HEK293 (cell line): ENCODE measurements at regions of chr6 and their contacts with region 1.

Region 1: GRCh38 chr6:136550330-136551071 is at the start of gene MAP7:
- H3K4me3 ChIP-seq: peak within 1 kb of the TSS; percentile 90
- H3K27ac ChIP-seq: peak within 1 kb of the TSS; percentile 82; the same call in 1 of the 2 replicates
- H3K4me1 ChIP-seq: peaks cover 10% of the 10 kb centered on the region
- CTCF ChIP-seq: 0 out of 2 replicates have a peak, but pooled peaks have one; percentile 46

Region 2: GRCh38 chr6:136249811-136250685 is 300.5 kb before region 1 on chr6 and contains the start of gene MTFR2:
- CTCF ChIA-PET with region 1: interaction called, 4 read pairs
- POLR2A ChIA-PET with region 1: interaction called, 11 read pairs
- H3K4me3 ChIP-seq: peak within 1 kb of the TSS; percentile 80
- H3K27ac ChIP-seq: peak within 1 kb of the TSS; percentile 51
- H3K4me1 ChIP-seq: peaks cover 12% of the 10 kb centered on the region; the same call in 1 of the 2 replicates
- CTCF ChIP-seq: peak; percentile 87; the same call in 1 of the 2 replicates

Region 3: GRCh38 chr6:136289579-136290409 is 260.7 kb before region 1 on chr6 and contains the start of gene BCLAF1:
- CTCF ChIA-PET with region 1: interaction called, 8 read pairs
- POLR2A ChIA-PET with region 1: interaction called, 15 read pairs
- H3K4me3 ChIP-seq: peak within 1 kb of the TSS; percentile 79
- H3K27ac ChIP-seq: peak within 1 kb of the TSS; percentile 95
- H3K4me1 ChIP-seq: peaks cover 13% of the 10 kb centered on the region
- CTCF ChIP-seq: peak; percentile 36; the same call in 1 of the 2 replicates

Region 4: DNA sequence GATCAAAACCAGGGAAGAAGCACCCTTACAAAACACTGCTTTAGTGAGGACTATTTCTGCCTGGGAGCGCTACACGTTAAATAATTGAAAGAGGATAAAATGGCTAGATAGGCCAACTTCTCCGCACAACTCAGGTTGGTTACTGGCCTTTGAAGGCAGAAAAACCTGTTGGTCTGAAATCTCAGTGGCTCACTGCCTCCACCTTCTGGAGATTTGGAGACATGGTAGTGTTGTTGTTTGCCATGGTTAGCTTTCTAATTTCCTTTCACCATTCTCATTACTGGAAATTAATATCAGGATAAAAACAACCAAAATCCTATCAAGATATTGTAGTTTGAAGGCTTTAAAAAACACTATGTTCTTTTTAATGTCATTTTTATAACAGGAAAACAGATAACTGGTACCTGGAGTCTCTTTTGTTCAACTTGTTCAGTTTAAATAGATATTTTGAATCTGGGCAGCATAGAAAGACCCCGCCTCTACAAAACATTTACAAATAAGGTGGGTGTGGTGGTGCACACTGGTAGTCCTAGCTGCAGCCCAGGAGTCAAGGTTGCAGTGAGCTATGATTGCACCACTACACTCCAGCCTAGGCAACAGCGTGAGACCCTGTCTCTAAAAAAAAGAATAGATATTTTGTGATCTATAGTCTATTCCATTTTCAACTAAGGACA is 233.3 kb before region 1 on chr6:
- CTCF ChIA-PET with region 1: interaction called, 11 read pairs
- POLR2A ChIA-PET with region 1: no interaction called
- H3K4me3 ChIP-seq: no peak overlapping the region
- H3K27ac ChIP-seq: no peak overlapping the region
- H3K4me1 ChIP-seq: no peaks in the 10 kb centered on the region
- CTCF ChIP-seq: peak; percentile 47

Region 5: DNA sequence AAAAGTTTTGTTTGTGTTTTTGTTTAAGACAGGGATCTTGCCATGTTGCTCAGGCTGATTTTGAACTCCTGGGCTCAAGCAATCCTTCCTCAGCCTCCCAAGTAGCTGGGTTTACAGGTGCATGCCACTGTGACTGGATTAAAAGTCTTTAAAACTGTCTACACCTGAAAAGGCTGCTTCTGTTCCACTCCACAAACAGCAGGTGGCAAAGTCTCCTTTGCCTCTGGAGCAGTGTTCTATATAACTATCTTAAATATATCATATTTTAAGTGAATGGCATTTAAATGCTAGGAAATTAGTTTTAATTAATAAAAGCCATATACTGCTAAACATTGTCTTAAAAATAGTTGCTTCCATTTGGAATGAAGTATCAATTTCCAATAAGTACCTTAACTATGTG is 171.6 kb before region 1 on chr6:
- CTCF ChIA-PET with region 1: interaction called, 11 read pairs
- POLR2A ChIA-PET with region 1: no interaction called
- H3K4me3 ChIP-seq: no peak overlapping the region
- H3K27ac ChIP-seq: no peak overlapping the region
- H3K4me1 ChIP-seq: no peaks in the 10 kb centered on the region
- CTCF ChIP-seq: no peak

Region 6: GRCh38 chr6:136526196-136526930 is 24.1 kb before region 1 on chr6:
- CTCF ChIA-PET with region 1: interaction called, 14 read pairs
- POLR2A ChIA-PET with region 1: interaction called, 3 read pairs
- H3K4me3 ChIP-seq: no peak overlapping the region
- H3K27ac ChIP-seq: no peak overlapping the region
- H3K4me1 ChIP-seq: peaks cover 28% of the 10 kb centered on the region
- CTCF ChIP-seq: peak; percentile 71

Region 7: DNA sequence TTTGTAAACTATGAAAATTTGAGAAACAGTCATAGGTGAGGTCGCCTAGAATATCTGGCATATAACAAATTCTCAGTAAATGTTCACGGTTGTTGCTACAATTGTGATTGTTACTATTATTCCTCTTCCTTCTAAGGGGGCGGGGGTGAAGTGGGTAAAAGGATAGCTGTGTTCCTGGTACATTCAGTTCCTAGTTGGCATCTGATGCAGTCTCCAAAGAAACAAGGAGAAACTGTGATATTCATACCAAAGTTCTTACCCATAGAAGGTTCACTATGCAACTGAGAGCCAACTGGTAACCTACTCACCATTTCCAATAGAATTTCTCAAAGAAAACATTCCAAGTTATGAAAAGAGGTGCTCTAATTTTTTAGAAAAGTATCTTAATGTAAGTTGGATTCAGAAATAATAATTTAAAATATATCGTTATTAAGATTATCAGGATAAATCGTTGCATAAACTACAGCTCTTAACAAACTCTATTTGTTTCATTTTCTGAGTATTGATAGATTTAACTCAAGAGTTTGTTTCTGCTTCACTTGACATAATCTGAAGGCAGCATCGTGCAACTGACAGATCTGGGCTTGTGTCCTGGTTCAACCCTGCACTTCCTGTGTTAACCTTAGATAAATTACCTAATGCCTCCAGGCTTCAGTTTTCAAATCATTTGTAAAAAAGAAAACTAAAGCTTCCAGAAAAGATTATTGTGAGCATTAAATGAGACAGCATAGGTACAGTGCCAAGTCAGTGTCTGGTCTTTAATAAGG is 13.1 kb after region 1 on chr6:
- CTCF ChIA-PET with region 1: interaction called, 31 read pairs
- POLR2A ChIA-PET with region 1: no interaction called
- H3K4me3 ChIP-seq: no peak overlapping the region
- H3K27ac ChIP-seq: no peak overlapping the region
- H3K4me1 ChIP-seq: peaks cover 22% of the 10 kb centered on the region
- CTCF ChIP-seq: no peak

Region 8: GRCh38 chr6:136594671-136595070 is 44.2 kb after region 1 on chr6:
- CTCF ChIA-PET with region 1: no interaction called
- POLR2A ChIA-PET with region 1: no interaction called
- H3K4me3 ChIP-seq: no peak overlapping the region
- H3K27ac ChIP-seq: no peak overlapping the region
- H3K4me1 ChIP-seq: no peaks in the 10 kb centered on the region
- CTCF ChIP-seq: no peak